Cardiac septum (tissue), 1 donor: ENCODE measurements at regions of chr11 and their contacts with region 1.

Region 1: GRCh38 chr11:2382936-2383851 is 6.1 kb downstream of the CD81 start:
- DNase-seq: peak; percentile 90

Region 2: DNA sequence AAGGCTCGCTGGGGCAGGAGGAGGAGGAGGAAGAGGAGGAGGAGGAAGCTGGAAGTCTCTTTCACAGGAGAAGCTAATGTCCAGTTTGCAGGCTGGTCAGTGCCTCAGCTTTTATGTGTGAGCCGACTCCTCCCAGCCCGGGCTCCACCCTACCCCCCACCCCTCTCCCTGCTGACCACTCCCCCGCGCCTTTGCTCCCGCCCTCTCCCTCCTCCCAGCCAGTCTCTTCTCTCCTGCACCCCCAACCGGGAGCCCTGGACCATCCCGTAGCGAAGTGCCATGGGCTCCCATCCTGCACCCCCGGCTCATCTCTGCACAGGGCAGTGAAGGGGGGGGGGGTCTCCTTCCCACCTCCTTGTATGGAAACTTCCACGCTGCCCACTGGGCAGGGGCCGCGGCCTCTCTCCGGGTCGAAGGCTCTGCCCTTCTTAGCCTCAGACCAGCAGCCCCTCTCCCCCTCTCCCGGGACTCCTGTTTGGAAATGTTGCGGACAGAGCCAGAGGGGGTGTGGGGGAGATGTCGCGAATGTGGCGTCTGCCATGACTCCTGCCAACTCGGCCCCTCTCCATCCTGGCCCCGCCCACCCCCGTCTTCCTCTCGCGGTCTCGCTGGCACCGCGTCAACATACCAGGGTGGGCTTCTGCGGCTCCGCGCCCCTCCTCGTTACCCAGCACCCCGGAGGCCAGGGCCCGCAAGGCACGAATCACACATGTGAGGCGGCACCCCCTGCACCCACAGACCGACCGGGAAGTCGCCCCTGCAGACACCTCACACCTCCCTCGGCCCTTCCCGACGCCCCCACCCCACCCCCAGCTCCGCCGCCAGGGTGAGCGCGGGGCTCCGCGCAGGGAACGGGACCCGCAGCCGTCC is 245.8 kb before region 1 on chr11:
- intact Hi-C with region 1: no loop called
- DNase-seq: no peak

Region 3: DNA sequence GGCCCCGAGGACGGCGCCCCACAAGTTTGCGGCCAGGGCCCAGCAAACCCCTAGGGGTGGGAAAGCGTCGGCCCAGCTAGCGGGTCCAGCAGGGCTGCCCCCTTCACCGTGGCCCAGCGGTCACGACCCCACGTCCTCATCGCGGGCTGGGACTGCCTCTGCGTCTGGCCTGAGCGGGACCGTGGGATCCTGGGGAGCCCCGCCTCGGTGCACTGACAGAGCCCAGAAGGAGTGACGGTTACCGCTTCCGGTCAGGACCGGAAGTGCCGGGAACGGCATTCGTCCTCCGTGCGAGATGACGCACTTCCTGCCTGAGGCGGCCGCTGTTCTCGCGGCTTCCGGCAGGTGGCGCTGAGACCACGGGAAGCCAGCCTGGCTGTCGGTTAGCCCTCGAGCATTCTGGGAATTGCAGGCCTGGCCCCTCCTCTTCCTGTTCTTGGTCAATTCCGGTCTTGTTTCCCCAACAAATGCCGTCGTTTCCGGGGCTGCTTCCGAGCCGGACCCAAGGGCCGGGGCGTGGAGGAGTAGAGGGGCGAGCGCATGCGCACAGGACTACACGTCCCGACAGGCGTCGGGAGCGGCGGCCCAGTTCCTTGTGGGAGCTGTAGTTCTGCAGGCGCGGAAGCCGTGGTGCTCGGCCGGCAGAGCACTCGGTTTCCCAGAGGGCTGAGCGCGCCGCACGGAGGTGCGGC is 17.0 kb after region 1 on chr11 and contains the start of gene TSSC4:
- intact Hi-C with region 1: loop called (anchors 1 kb)
- DNase-seq: peak; percentile 100
- total RNA-seq, gene TSSC4: 36.2 TPM